Posterior cingulate gyrus (tissue), 11 donors: ENCODE measurements at regions of chr12 and their contacts with region 1.

Region 1: DNA sequence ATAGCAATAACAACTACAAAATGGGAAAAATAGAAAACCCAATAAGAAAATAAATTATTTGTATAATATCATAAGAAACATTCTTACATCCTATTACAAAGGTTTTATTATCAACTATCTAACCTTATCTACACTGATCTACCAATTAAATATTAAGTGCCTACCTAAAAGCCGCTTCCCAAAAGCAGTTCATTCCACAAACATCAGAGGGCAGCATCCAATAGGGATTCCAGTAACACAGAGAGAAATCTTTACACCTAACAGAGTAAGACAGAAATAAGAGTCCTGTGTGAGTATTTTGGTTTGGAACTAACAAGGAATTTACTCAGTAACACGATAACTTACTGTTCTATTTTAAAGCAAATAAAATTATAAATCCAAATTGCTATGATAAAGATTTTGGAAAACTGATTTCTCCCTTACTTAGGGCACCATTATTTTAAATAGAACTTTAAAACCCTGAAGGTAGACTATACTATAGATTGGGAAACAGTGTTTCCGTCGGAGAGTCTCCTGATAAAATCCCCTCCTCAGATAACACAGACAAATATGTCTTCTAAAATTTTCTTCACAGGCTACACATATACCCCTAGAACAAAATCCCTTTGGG is 15.0 kb downstream of the GXYLT1 start:
- DNase-seq: peak in 2 of 10 donors; percentile 23 to 28

Region 2: DNA sequence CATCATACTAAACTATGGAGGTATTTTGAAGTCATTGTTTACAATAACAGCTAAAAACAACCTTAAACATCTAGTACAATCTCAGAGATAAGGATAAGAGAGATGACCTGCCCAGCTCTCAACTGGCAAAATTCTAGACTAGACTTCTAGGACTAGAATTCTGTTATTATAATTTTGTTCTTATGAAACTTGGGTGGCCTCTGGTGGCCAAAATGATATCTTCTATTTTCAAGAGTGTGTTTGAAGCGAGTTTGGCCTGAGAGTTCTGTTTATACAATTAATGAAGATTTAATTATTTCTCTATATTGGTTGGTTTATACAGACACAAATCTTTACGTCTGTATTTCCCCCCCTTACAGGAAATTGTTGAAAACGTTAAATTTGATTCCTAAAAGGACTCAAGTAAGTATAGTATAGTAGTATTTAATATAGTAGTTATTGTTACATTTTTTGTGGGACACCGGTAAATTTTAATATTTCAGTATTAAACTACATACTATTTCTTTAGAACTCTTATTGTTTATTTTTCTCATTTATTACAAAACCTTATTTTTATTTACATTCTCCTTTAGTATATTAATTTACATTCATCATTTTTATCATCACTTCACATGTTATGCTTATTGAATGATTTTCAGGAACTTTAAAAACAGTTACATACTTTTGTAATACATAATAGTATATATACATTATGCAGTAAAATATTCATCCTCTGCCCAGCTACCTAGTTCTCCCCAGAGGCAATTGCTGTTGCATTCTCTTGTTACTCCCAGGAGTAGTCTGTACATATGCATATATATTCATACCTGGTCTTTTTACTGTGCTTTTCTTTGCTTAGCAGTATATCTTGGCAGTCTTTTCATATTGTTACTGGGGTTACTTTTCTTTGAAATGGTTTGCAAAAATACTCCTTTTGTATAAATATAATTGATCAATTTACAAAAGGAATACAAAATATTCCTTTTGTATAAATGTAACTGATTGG is 202.9 kb after region 1 on chr12:
- intact Hi-C with region 1: loop called (anchors 1 kb)
- DNase-seq: peak in 1 of 10 donors; percentile 8

Region 3: DNA sequence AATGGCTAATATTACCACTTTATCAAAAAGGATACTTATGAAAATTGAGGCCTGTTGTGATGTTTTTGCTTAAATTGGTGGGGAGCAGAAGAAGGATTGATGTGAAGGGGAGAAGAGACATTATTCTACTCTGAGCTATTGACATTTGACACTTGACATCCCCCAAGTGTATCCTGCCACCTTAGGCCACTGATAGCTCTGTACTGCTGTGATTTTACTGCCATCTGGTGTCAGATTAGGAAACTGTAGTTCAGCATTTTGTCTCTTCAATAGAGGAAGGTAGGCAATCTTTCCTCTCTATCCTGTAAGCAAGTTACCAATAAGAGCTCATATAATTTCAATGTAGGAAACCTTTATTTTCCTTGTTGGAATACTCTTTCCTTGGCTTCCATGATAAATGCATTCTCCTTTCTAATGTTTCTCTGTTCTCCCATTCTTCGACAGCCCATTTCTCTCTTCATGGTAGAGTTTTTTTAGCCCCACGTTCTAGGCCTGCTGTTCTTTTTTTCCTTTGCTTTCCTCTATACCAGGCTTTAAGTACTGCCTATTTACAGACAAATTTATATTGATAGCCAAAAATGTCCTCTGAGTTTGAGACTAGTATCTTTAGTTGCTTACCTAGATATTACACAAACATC is 242.6 kb after region 1 on chr12:
- intact Hi-C with region 1: loop called (anchors 5 kb)
- DNase-seq: no peak